GM23248 (cell line): ENCODE measurements at regions of chr12 and their contacts with region 1.

Region 1: GRCh38 chr12:68231229-68231628 is 5.6 kb upstream of the IL26 start:
- DNase-seq: no peak
- H3K4me3 ChIP-seq: no peak overlapping the region
- H3K27ac ChIP-seq: no peak overlapping the region
- H3K4me1 ChIP-seq: no peaks in the 10 kb centered on the region
- H3K27me3 ChIP-seq: no peaks in the 10 kb centered on the region

Region 2: GRCh38 chr12:68310370-68310769 is 79.1 kb after region 1 on chr12:
- in situ Hi-C with region 1: loop called (anchors 5 kb)
- DNase-seq: peak; percentile 82
- H3K4me3 ChIP-seq: no peak overlapping the region
- H3K27ac ChIP-seq: peak overlapping the region; percentile 56
- H3K4me1 ChIP-seq: peaks cover 22% of the 10 kb centered on the region
- H3K27me3 ChIP-seq: no peaks in the 10 kb centered on the region

Region 3: DNA sequence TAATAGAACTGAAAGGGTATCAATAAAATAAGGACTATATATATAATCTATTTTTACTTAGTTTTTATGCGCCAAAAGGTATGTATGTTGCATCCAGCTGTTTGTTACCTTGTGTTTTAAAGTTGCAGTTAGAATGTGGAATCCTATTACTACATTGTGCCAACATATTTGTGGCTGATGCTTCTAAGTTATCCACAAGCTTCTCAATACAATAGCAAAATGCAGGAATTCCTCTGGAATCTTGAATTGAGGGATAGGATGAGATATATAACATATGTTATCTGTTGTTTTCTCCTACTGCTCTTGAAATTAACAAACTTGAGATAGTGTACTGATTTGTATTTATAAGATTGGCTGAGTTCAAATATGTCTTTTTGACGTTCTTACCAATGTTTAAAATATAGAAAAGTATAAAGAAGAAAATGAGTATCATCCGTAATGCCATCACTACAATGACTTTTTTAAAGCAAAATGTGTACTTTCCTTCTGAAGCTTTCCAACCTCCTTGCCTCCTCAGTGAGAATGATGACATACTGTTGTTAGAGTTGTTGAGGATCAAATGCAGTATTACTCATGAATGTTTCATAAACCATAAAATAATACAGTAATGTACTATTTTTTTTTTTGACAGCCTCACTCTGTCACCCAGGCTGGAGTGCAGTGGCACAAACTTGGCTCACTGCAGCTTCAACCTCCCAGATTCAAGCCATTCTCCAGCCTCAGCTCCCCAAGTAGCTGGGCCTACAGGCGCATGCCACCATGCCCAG is 386.1 kb after region 1 on chr12:
- in situ Hi-C with region 1: no loop called
- DNase-seq: peak; percentile 81
- H3K4me3 ChIP-seq: peak overlapping the region; percentile 29
- H3K27ac ChIP-seq: peak overlapping the region; percentile 73
- H3K4me1 ChIP-seq: peaks cover 83% of the 10 kb centered on the region
- H3K27me3 ChIP-seq: no peaks in the 10 kb centered on the region